A549 (cell line): ENCODE measurements at regions of chr1 and their contacts with region 1.

Region 1: GRCh38 chr1:205591522-205592351 is 40.1 kb downstream of the ELK4 start:
- DNase-seq: peak; percentile 81 to 89
- ATAC-seq: peak; percentile 92
- H3K4me3 ChIP-seq: peak overlapping the region; percentile 37
- H3K27ac ChIP-seq: peak overlapping the region; percentile 64 to 72
- H3K4me1 ChIP-seq: peaks cover 3% of the 10 kb centered on the region; the same call in 1 of the 3 replicates
- CTCF ChIP-seq: peak; percentile 95
- EP300 ChIP-seq: no peak
- POLR2A ChIP-seq: no peak
- RAD21 ChIP-seq: peak; percentile 97 to 98

Region 2: DNA sequence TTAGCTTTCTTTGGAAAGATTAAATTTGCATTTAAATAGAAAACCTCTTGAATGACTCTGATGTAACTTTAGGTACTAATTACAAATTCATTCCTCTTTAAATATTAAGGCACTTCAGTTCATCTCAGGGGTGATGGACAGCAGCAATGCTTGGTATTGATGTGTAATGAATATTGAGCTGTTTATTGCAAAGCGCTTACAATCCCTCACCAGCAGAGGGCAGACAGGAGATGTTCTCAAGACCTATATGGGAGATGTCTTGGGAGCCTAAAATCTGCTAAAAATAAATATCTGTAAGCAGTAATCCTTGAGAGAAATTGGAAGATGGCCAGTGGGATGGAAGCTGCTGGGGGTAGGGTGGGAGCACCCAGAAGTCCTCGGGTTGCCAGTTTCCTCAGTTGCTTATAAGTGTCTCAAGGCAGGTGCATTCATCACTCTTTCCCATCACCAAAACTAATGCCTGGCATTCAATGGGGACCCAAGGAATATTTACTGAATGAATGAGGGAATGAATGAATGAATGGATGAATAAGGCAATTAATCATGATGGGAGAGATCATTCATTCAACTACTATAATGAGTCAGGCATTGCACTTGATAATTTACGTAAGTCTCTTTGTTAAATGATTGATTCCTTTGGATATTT is 237.4 kb before region 1 on chr1:
- CTCF ChIA-PET with region 1: interaction called, 10 read pairs
- POLR2A ChIA-PET with region 1: no interaction called
- DNase-seq: peak; percentile 35 to 76
- ATAC-seq: peak; percentile 65 to 83; a peak in 4 of 6 replicates
- H3K4me3 ChIP-seq: no peak overlapping the region
- H3K27ac ChIP-seq: no peak overlapping the region; a peak in 1 of 6 replicates
- H3K4me1 ChIP-seq: peaks cover 25% of the 10 kb centered on the region
- CTCF ChIP-seq: peak; percentile 86
- EP300 ChIP-seq: no peak
- POLR2A ChIP-seq: no peak
- RAD21 ChIP-seq: peak; percentile 74 to 79

Region 3: GRCh38 chr1:205543411-205544301 is 48.1 kb before region 1 on chr1:
- CTCF ChIA-PET with region 1: interaction called, 12 read pairs
- POLR2A ChIA-PET with region 1: interaction called, 4 read pairs
- DNase-seq: peak in 1 of 2 experiments; percentile 63
- ATAC-seq: peak; percentile 62 to 78
- H3K4me3 ChIP-seq: peak overlapping the region; percentile 29; the same call in 1 of the 3 replicates
- H3K27ac ChIP-seq: peak overlapping the region; percentile 12 to 65; a peak in 3 of 6 replicates
- H3K4me1 ChIP-seq: peaks cover 9% of the 10 kb centered on the region; the same call in 2 of the 3 replicates
- CTCF ChIP-seq: no peak
- EP300 ChIP-seq: no peak
- POLR2A ChIP-seq: no peak
- RAD21 ChIP-seq: no peak

Region 4: DNA sequence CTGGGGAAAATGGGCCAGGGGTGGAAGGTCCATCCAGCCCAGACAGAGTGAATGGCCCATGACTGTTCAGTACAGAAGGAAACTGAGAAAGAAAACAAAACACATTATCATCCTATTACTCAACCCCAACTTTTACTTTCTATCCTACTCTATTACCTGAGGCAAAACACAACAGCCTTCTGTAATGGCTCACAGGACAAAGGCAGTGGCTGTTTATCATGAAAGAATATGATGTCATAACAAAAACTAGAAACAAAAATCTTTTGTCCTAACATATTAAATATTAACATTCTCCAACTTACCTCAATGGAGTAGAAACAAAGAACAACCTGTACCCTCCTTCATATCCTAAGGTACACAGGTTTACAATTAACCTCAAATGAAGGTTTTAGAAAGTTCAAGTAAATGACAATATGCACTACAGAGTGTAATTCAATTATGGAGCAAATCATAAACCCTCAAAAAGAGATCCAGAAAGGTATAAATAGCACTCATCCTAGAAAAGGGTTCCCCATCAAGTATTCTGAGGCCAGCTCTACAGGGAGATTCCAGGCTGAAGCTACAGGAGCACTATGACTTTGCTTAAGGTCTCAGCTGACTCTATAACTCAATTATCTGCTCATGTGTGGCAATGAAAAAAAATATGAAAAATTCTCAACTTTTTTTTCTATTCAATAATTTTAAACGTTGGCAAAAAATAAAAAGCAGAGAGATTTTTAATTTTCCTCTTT is 25.0 kb after region 1 on chr1:
- CTCF ChIA-PET with region 1: interaction called, 29 read pairs
- POLR2A ChIA-PET with region 1: no interaction called
- DNase-seq: no peak
- ATAC-seq: no peak
- H3K4me3 ChIP-seq: no peak overlapping the region
- H3K27ac ChIP-seq: no peak overlapping the region; a peak in 1 of 6 replicates
- H3K4me1 ChIP-seq: peaks cover 9% of the 10 kb centered on the region; the same call in 1 of the 3 replicates
- CTCF ChIP-seq: no peak
- EP300 ChIP-seq: no peak
- POLR2A ChIP-seq: no peak
- RAD21 ChIP-seq: no peak

Region 5: GRCh38 chr1:205650241-205650640 is 58.5 kb after region 1 on chr1:
- CTCF ChIA-PET with region 1: interaction called, 423 read pairs
- POLR2A ChIA-PET with region 1: no interaction called
- DNase-seq: no peak
- ATAC-seq: no peak
- H3K4me3 ChIP-seq: no peak overlapping the region
- H3K27ac ChIP-seq: no peak overlapping the region
- H3K4me1 ChIP-seq: no peaks in the 10 kb centered on the region
- CTCF ChIP-seq: no peak
- EP300 ChIP-seq: no peak
- POLR2A ChIP-seq: no peak
- RAD21 ChIP-seq: no peak

Region 6: DNA sequence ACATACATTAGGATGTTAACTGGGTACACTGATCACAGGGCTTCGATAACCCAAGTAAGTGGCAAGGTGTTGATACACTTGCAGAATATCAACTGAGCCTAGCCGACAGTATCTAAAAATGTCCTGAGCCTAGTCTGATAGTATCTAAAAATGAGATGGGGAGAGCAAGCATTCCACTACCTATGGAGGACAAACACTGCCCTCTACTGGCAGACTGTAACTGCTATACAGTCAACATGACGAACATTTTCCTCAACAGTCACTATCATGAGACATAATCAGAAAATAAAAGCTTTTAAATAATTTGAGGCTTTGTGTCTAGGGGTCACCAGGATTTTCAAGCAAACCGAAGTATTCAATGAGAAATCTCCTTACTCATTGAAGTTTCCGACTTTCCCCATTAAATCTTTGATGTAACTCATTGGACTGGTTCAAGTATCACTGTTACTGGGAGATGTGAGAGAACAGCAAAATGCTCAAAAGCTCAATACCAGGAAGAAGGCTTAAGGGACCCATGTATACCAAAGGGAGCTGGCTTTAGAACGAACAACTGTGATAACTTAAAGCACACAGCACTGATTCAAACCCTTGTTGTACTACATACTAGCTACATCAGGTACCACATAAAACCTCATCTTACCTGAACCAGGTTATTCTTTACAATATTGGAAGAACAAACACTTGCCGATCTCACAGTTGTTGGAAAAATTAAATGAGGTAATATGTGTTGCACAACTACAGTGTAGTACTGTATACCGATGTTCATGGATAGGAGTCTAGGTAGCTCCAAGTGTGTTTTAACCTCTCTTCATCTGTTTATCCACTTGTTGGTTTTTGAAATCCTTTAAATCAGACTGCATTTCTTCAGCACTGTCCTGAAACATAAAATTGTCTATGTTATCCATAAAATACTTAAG is 119.6 kb after region 1 on chr1:
- CTCF ChIA-PET with region 1: interaction called, 91 read pairs
- POLR2A ChIA-PET with region 1: no interaction called
- DNase-seq: peak; percentile 59 to 80
- ATAC-seq: peak; percentile 89 to 92
- H3K4me3 ChIP-seq: no peak overlapping the region
- H3K27ac ChIP-seq: no peak overlapping the region
- H3K4me1 ChIP-seq: peaks cover 10% of the 10 kb centered on the region; the same call in 2 of the 3 replicates
- CTCF ChIP-seq: peak; percentile 91
- EP300 ChIP-seq: no peak
- POLR2A ChIP-seq: no peak
- RAD21 ChIP-seq: peak; percentile 66 to 78